Posterior cingulate gyrus (tissue), 11 donors: ENCODE measurements at regions of chr18 and their contacts with region 1.

Region 1: GRCh38 chr18:62522504-62523254 is at the start of gene ZCCHC2:
- DNase-seq: peak; percentile 98 to 100 (median 99)

Region 2: DNA sequence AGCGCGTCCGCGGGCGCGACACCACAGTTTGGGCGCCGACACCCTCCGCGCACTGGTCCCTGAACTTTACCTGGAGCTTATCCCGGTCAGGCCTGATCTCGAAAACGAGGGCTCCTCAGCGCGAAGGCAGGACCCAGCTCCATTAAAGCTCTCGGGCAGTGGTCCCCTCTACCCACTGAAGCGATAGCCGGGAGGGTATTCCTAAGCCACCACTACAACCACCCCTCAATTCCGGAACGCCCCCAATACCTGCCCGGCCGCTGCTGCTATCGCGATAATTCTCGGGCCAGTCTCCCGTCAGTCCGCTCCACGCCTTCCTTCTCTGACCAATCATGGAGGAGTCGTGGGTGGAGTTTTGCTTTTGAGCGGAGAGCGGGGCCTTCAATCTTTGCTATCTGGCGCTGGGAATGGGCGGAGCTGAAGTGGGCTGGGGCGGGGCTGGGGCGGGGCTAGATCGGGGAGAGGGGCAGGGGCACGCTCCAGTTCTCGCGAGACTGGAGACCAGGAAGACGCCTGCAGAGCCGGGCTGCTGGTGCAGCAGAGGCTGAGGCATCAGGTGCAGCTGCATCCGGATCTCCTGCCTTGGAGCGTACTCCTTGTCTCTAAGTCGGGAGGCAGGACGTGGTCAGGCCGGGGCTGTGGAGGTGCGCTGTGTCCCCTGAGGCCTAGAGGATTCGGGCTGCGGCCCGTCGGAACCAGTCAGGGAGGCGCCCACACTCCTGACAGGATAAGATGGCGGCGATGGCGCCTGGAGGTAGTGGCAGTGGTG is 335.7 kb before region 1 on chr18 and contains the starts of genes PIGN and RELCH:
- intact Hi-C with region 1: loop called (anchors 5 kb)
- DNase-seq: peak; percentile 91 to 99 (median 95)

Region 3: DNA sequence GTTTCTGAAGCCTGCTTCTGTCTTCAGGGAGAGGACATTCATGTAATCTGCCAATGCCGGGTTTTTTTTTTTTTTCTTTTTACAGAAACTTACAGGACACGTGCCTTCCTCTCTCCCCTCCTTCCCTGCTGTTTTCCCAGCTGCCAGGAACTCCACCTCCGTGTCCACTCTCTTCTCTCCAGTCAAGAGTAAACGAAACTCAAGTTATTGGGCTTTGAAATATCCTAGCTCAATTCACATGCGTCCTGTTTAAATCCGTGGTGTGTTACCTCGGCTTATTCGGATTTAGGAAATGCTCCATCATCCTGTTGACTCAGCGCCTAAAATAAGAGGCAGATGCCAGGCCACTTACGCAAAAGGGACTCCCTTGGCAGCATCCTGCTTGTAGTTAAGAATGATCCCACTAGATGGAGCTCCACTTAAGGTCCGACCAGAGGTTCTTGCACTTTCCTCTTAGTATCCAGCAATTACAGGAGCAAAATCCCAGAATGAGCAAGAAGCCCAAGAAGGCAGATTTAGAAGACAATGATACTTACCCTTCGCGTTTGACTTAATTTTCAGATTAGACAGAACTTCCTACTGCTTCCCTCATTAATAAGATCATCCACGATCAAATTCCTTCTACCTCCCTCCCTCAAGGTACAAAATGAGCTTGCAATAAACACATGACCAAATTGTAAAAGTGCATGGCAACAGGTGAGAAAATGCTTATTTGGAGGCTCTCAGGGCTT is 97.0 kb before region 1 on chr18:
- intact Hi-C with region 1: loop called (anchors 5 kb)
- DNase-seq: peak in 8 of 10 donors; percentile 44 to 93 (median 66)

Region 4: GRCh38 chr18:62584241-62585120 is 61.8 kb after region 1 on chr18:
- intact Hi-C with region 1: loop called (anchors 5 kb)
- DNase-seq: peak; percentile 76 to 98 (median 86)

Region 5: GRCh38 chr18:63422087-63422809 is 899.6 kb after region 1 on chr18 and contains the start of gene VPS4B:
- intact Hi-C with region 1: loop called (anchors 10 kb)
- DNase-seq: peak; percentile 99 to 100 (median 100)